Tibial artery (tissue), 4 donors: ENCODE measurements at regions of chr2 and their contacts with region 1.

Region 1: GRCh38 chr2:10897956-10898355 is 13.8 kb upstream of the KCNF1 start:
- DNase-seq: peak in 1 of 2 donors; percentile 7
- H3K4me3 ChIP-seq: no peak overlapping the region
- H3K27ac ChIP-seq: no peak overlapping the region
- H3K4me1 ChIP-seq: no peaks in the 10 kb centered on the region
- H3K27me3 ChIP-seq: no peaks in the 10 kb centered on the region
- CTCF ChIP-seq: no peak

Region 2: DNA sequence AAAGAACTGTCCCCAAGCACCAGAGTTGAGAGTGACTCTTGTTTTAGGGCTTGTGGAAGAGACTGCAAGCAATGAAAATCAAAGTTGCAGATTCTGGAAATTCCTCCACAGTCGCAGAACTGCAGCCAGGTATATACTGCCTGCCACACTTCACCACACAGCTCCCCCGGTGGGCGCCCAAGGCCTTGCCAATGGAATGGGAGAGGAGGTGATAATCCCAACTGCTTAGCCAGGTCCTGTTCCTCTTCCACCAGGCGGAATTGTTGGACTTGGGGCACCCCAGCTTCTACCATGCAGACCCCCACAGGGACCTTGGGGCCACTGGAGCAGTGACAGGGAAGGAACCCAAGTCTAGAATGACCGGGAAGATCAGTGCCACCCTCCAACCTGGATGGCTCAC is 80.5 kb before region 1 on chr2:
- intact Hi-C with region 1: no loop called
- DNase-seq: peak in 1 of 2 donors; percentile 43
- H3K4me3 ChIP-seq: no peak overlapping the region
- H3K27ac ChIP-seq: no peak overlapping the region
- H3K4me1 ChIP-seq: peaks cover 0 to 6% (median 2%) of the 10 kb centered on the region in 4 donors
- H3K27me3 ChIP-seq: peaks cover 0 to 23% of the 10 kb centered on the region in 2 donors
- CTCF ChIP-seq: no peak

Region 3: GRCh38 chr2:12884713-12885282 is 1986.8 kb after region 1 on chr2:
- intact Hi-C with region 1: loop called (anchors 5 kb)
- DNase-seq: peak; percentile 71 to 78
- H3K4me3 ChIP-seq: no peak overlapping the region
- H3K27ac ChIP-seq: no peak overlapping the region
- H3K4me1 ChIP-seq: peaks cover 0 to 17% (median 8%) of the 10 kb centered on the region in 4 donors
- H3K27me3 ChIP-seq: no peaks in the 10 kb centered on the region
- CTCF ChIP-seq: no peak